ENCODE measurements at regions of chr16 and their contacts with region 1.

Region 1: GRCh38 chr16:89241187-89242007 is 23.9 kb downstream of the ZNF778 start:
- DNase-seq: peak; percentile 92 to 97 (median 93)
- H3K4me3 ChIP-seq: peak overlapping the region; percentile 73 to 80
- H3K4me3 Mint-ChIP-seq: peak overlapping the region; percentile 90 to 98 (median 96)
- H3K27ac ChIP-seq: peak overlapping the region; percentile 91
- H3K27ac Mint-ChIP-seq: peak overlapping the region; percentile 95 to 100 (median 99)
- H3K4me1 ChIP-seq: peaks cover 13% of the 10 kb centered on the region
- H3K4me1 Mint-ChIP-seq: peaks cover 8 to 36% (median 18%) of the 10 kb centered on the region in 4 donors
- H3K27me3 ChIP-seq: no peaks in the 10 kb centered on the region
- H3K27me3 Mint-ChIP-seq: no peaks in the 10 kb centered on the region

Region 2: DNA sequence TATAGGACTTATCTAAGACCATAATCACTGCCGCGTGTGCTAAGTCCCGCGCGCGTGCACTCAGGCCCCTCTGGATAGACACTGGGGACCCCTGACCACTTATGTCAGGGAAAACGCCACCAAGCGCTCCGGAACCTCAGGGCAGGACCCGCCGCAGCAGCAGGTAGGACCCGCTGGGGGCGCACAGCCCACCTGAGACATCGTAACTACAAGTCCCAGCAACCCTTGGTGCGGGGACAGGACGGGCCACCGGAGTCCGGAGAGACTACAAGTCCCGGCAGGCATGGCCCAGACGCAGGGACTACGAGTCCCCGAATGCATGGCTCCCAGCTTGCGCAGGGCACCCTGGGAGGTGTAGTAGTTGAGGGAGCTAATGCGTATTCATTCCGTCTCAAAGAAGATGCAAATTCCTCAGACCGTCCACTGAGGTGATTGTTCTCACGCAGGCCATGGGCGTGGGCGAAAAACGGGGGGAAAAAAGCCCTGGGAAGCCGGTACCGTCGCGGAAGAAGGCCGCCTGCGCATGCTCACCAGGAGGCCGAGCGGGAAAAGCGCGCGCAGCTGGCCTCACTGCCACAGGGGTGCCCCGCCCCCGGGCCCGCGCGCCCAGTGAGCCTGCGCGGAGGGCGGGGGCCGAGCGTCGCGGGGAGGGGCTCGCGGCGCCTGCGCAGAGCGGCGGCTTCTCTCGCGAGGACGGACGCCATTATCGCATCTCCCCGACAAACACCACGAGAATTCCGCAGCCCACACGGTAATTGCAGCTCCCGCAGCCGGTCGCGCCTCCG is 1290.4 kb before region 1 on chr16 and contains the start of gene BANP:
- CTCF ChIA-PET with region 1: no interaction called
- POLR2A ChIA-PET with region 1: no interaction called
- intact Hi-C with region 1: loop called (anchors 5 kb)
- DNase-seq: peak; percentile 98 to 99 (median 99)
- H3K4me3 ChIP-seq: peak within 1 kb of the TSS; percentile 89 to 90
- H3K4me3 Mint-ChIP-seq: peak within 1 kb of the TSS; percentile 97 to 100 (median 99)
- H3K27ac ChIP-seq: peak within 1 kb of the TSS; percentile 74
- H3K27ac Mint-ChIP-seq: peak within 1 kb of the TSS; percentile 98 to 100 (median 100)
- H3K4me1 ChIP-seq: peaks cover 43% of the 10 kb centered on the region
- H3K4me1 Mint-ChIP-seq: peaks cover 23 to 49% (median 39%) of the 10 kb centered on the region in 4 donors
- H3K27me3 ChIP-seq: no peaks in the 10 kb centered on the region
- H3K27me3 Mint-ChIP-seq: peaks cover 0 to 2% of the 10 kb centered on the region in 2 donors
- total RNA-seq, gene BANP: 61.8 to 72.7 TPM

Region 3: GRCh38 chr16:89217388-89218191 is 23.8 kb before region 1 on chr16 and contains the start of gene ZNF778:
- CTCF ChIA-PET with region 1: interaction called, 9 read pairs
- POLR2A ChIA-PET with region 1: interaction called, 8 read pairs
- intact Hi-C with region 1: loop called (anchors 1 kb)
- DNase-seq: peak; percentile 83 to 87 (median 85)
- H3K4me3 ChIP-seq: peak within 1 kb of the TSS; percentile 76 to 91
- H3K4me3 Mint-ChIP-seq: peak within 1 kb of the TSS; percentile 73 to 94 (median 92)
- H3K27ac ChIP-seq: peak within 1 kb of the TSS; percentile 94
- H3K27ac Mint-ChIP-seq: peak within 1 kb of the TSS; percentile 64 to 98 (median 92)
- H3K4me1 ChIP-seq: peaks cover 21% of the 10 kb centered on the region
- H3K4me1 Mint-ChIP-seq: peaks cover 10 to 37% (median 26%) of the 10 kb centered on the region in 4 donors
- H3K27me3 ChIP-seq: no peaks in the 10 kb centered on the region
- H3K27me3 Mint-ChIP-seq: no peaks in the 10 kb centered on the region
- total RNA-seq, gene ZNF778: 13.1 to 15.9 TPM

Region 4: DNA sequence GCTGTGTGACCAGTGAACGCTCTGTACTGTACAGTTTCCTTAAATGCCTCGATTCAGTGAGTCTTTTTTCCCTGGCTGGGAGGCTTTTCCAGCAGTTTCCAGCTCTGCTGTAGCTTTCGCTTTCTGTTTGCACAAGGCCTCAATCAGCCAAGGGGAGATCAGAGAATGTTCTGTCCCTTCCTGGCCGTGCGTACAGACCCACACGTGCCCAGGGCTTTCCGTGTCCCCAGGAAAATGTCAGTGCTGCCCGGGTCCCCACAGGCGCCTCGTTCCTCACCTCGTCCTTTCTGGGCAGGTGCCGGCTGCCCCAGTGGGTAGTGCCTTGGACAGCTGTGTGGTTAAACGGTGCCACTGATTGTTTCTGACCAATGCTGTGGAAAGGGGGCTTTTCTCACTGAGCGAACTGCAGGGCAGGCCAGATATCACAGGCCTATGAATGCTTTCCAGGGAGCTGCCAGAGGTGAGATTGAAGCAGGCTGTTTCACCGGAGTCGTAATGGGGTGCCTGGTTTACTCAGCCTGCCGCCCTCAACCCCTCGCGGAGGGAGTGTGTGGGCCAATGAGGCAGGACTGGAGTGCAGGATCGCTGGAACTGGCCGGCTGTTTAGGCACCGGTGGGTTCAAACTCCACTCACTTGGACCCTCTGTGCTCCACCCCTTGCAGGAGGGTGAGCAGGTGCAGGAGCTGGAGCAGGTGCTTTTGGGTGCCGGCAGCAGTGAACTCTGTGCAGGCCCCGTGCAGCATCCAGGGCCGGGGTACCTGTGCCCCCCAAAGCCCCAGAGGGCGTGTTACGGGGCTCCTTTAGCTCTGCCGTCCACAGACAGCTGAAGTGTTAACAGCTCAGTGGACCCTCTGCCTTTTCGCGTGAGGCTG is 20.5 kb after region 1 on chr16:
- CTCF ChIA-PET with region 1: no interaction called
- POLR2A ChIA-PET with region 1: no interaction called
- intact Hi-C with region 1: no loop called
- DNase-seq: no peak
- H3K4me3 ChIP-seq: no peak overlapping the region
- H3K4me3 Mint-ChIP-seq: no peak overlapping the region
- H3K27ac ChIP-seq: no peak overlapping the region
- H3K27ac Mint-ChIP-seq: peak overlapping the region in 2 of 7 donors; percentile 13 to 36
- H3K4me1 ChIP-seq: peaks cover 11% of the 10 kb centered on the region
- H3K4me1 Mint-ChIP-seq: peaks cover 4 to 19% (median 13%) of the 10 kb centered on the region in 4 donors
- H3K27me3 ChIP-seq: peaks cover 4% of the 10 kb centered on the region
- H3K27me3 Mint-ChIP-seq: peaks cover 4 to 7% of the 10 kb centered on the region in 2 donors

Region 5: DNA sequence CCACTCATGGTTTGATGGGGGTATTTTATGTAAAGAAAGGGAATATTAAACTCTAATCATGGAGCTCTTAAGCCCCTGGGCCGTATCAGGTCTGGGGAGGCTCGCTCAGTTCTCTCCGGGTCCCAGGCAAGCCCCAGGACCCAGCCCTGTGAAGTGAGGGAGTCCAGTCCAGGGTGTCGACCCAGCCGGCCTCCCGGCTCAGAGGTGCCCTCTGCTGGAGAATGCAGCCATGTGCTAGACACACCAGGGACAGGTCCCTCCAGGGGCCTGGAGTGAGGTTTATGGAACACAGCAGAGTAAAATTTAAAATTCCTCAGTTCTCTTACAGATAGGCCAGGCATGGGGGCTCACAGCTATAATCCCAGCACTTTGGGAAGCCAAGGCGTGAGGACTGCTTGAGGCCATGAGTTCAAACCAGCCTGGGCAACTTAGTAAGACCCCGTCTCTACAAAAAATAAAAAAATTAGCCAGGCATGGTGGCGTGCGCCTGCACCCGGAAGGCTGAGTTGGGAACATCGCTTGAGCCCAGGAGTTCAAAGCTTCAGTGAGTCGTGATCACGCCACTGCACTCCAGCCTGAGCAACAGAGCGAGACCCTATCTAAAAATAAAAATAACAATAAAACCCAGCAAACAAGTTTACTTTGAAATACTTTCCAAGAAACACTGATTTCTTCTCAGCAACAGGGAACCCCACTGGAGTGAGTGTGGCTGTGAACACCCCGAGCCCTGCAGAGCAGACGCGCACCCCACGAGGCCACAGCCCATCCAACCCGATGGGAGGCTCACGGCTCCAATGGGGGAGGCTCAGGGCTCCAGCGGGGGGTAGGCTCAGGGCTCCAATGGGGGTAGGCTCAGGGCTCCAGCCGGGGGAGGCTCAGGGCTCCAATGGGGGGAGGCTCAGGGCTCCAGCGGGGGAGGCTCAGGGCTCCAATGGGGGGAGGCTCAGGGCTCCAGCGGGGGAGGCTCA is 48.3 kb after region 1 on chr16:
- CTCF ChIA-PET with region 1: interaction called, 19 read pairs
- POLR2A ChIA-PET with region 1: interaction called, 6 read pairs
- intact Hi-C with region 1: loop called (anchors 1 kb)
- DNase-seq: peak; percentile 54 to 65 (median 61)
- H3K4me3 ChIP-seq: no peak overlapping the region
- H3K4me3 Mint-ChIP-seq: no peak overlapping the region
- H3K27ac ChIP-seq: peak overlapping the region; percentile 7
- H3K27ac Mint-ChIP-seq: peak overlapping the region in 5 of 7 donors; percentile 54 to 80 (median 69)
- H3K4me1 ChIP-seq: peaks cover 4% of the 10 kb centered on the region
- H3K4me1 Mint-ChIP-seq: peaks cover 6 to 17% (median 10%) of the 10 kb centered on the region in 4 donors
- H3K27me3 ChIP-seq: no peaks in the 10 kb centered on the region
- H3K27me3 Mint-ChIP-seq: no peaks in the 10 kb centered on the region

Region 6: GRCh38 chr16:89560378-89561141 is 319.2 kb after region 1 on chr16 and contains the start of gene RPL13:
- CTCF ChIA-PET with region 1: interaction called, 3 read pairs
- POLR2A ChIA-PET with region 1: interaction called, 3 read pairs
- intact Hi-C with region 1: loop called (anchors 2 kb)
- DNase-seq: peak; percentile 91 to 94 (median 93)
- H3K4me3 ChIP-seq: peak within 1 kb of the TSS; percentile 73 to 85
- H3K4me3 Mint-ChIP-seq: peak within 1 kb of the TSS; percentile 95 to 99 (median 98)
- H3K27ac ChIP-seq: peak within 1 kb of the TSS; percentile 88
- H3K27ac Mint-ChIP-seq: peak within 1 kb of the TSS; percentile 97 to 99 (median 98)
- H3K4me1 ChIP-seq: peaks cover 58% of the 10 kb centered on the region
- H3K4me1 Mint-ChIP-seq: peaks cover 32 to 66% (median 50%) of the 10 kb centered on the region in 4 donors
- H3K27me3 ChIP-seq: no peaks in the 10 kb centered on the region
- H3K27me3 Mint-ChIP-seq: no peaks in the 10 kb centered on the region
- total RNA-seq, gene RPL13: 4,825 to 5,043 TPM

Region 7: GRCh38 chr16:89641458-89642119 is 400.2 kb after region 1 on chr16:
- CTCF ChIA-PET with region 1: no interaction called
- POLR2A ChIA-PET with region 1: no interaction called
- intact Hi-C with region 1: loop called (anchors 2 kb)
- DNase-seq: no peak
- H3K4me3 ChIP-seq: no peak overlapping the region
- H3K4me3 Mint-ChIP-seq: peak overlapping the region in 3 of 8 donors; percentile 67 to 78 (median 71)
- H3K27ac ChIP-seq: no peak overlapping the region
- H3K27ac Mint-ChIP-seq: peak overlapping the region in 1 of 7 donors; percentile 33
- H3K4me1 ChIP-seq: peaks cover 7% of the 10 kb centered on the region
- H3K4me1 Mint-ChIP-seq: peaks cover 5 to 10% (median 7%) of the 10 kb centered on the region in 4 donors
- H3K27me3 ChIP-seq: no peaks in the 10 kb centered on the region
- H3K27me3 Mint-ChIP-seq: no peaks in the 10 kb centered on the region

Measured in CD4-positive, alpha-beta memory T cell (primary cell).